ENCODE measurements at regions of chr2 and their contacts with region 1.

Region 1: DNA sequence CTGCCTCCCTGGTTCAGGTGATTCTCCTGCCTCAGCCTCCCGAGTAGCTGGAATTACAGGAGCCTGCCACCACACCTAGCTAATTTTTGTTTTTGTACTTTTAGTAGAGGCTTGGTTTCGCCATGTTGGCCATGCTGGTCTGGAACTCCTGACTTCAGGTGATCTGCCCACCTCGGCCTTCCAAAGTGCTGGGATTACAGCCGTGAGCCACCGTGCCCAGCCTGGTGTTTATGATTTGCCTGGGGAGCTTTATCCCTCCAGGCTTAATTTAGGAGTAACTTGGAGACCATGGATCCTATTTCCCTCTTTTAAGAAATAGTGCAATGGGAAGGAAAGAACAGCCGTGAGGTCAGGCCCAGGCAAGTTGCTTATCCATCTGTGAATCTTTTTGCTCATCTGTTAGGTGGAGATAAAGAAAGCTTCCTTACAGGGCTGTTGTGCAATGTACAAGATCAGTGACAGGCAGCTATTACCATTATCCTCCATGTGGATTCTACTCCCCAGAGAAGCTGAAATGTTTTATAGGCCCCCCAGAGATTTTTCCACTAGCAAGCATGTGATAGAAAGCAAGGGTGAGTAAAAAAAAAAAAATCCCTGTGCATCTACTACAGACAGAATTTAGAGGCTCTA is 104.9 kb upstream of the MGAT5 start:
- DNase-seq: no peak
- H3K4me3 ChIP-seq: no peak overlapping the region
- H3K4me3 Mint-ChIP-seq: no peak overlapping the region
- H3K27ac ChIP-seq: peak overlapping the region; percentile 14
- H3K27ac Mint-ChIP-seq: peak overlapping the region in 5 of 8 donors; percentile 10 to 71 (median 59)
- H3K4me1 ChIP-seq: peaks cover 9% of the 10 kb centered on the region
- H3K4me1 Mint-ChIP-seq: peaks cover 52 to 78% (median 67%) of the 10 kb centered on the region in 3 donors
- H3K27me3 ChIP-seq: no peaks in the 10 kb centered on the region
- H3K27me3 Mint-ChIP-seq: no peaks in the 10 kb centered on the region

Region 2: DNA sequence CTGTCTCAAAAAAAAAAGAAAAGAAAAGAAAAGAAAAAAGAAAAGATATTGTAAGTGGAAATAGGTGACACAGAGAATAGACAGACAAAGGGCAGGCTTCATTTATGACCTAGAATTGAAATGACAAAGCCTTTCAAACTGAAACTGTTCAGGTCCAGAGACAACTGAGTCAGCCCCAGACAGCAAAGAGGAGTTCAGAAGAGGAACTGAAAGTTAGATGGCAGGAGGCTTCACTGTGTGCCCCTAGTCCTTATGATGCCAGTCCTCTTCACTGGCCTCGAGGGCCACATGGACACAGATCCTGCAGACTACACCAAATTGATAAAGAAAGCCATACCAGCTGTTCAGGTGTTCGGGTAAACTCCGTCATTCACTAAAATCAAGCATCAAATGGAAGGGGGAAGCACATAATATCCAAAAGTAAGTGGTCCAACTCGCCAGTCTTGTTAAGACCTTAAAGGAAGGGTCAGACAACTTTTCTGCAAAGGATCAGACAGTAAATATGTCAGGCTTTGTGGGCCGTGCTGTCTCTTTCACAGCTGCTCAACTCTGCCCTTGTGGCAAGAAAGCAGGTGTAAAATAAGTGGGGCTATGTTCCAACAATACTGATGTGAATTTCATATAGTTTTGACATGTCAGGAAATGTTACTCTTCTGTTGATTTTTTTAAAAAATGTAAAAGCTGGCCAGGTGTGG is 127.0 kb before region 1 on chr2:
- CTCF ChIA-PET with region 1: no interaction called
- POLR2A ChIA-PET with region 1: no interaction called
- DNase-seq: no peak
- H3K4me3 ChIP-seq: no peak overlapping the region
- H3K4me3 Mint-ChIP-seq: no peak overlapping the region
- H3K27ac ChIP-seq: no peak overlapping the region
- H3K27ac Mint-ChIP-seq: no peak overlapping the region
- H3K4me1 ChIP-seq: peaks cover 15% of the 10 kb centered on the region
- H3K4me1 Mint-ChIP-seq: peaks cover 16 to 30% (median 26%) of the 10 kb centered on the region in 3 donors
- H3K27me3 ChIP-seq: no peaks in the 10 kb centered on the region
- H3K27me3 Mint-ChIP-seq: peaks cover 9 to 13% of the 10 kb centered on the region in 2 donors

Region 3: GRCh38 chr2:134127496-134127895 is 21.5 kb before region 1 on chr2:
- CTCF ChIA-PET with region 1: no interaction called
- POLR2A ChIA-PET with region 1: no interaction called
- DNase-seq: peak; percentile 6 to 55 (median 17)
- H3K4me3 ChIP-seq: no peak overlapping the region
- H3K4me3 Mint-ChIP-seq: peak overlapping the region; percentile 36 to 79 (median 61)
- H3K27ac ChIP-seq: no peak overlapping the region
- H3K27ac Mint-ChIP-seq: peak overlapping the region in 7 of 8 donors; percentile 28 to 87 (median 71)
- H3K4me1 ChIP-seq: peaks cover 52% of the 10 kb centered on the region
- H3K4me1 Mint-ChIP-seq: peaks cover 81 to 94% (median 87%) of the 10 kb centered on the region in 3 donors
- H3K27me3 ChIP-seq: no peaks in the 10 kb centered on the region
- H3K27me3 Mint-ChIP-seq: no peaks in the 10 kb centered on the region

Region 4: GRCh38 chr2:134238371-134238770 is 89.4 kb after region 1 on chr2:
- CTCF ChIA-PET with region 1: interaction called, 3 read pairs
- POLR2A ChIA-PET with region 1: interaction called, 11 read pairs
- DNase-seq: no peak
- H3K4me3 ChIP-seq: no peak overlapping the region
- H3K4me3 Mint-ChIP-seq: no peak overlapping the region
- H3K27ac ChIP-seq: no peak overlapping the region
- H3K27ac Mint-ChIP-seq: peak overlapping the region in 4 of 8 donors; percentile 35 to 63 (median 58)
- H3K4me1 ChIP-seq: peaks cover 43% of the 10 kb centered on the region
- H3K4me1 Mint-ChIP-seq: peaks cover 67 to 90% (median 80%) of the 10 kb centered on the region in 3 donors
- H3K27me3 ChIP-seq: no peaks in the 10 kb centered on the region
- H3K27me3 Mint-ChIP-seq: no peaks in the 10 kb centered on the region

Measured in CD8-positive, alpha-beta memory T cell (primary cell).